ENCODE measurements at regions of chr12 and their contacts with region 1.

Region 1: DNA sequence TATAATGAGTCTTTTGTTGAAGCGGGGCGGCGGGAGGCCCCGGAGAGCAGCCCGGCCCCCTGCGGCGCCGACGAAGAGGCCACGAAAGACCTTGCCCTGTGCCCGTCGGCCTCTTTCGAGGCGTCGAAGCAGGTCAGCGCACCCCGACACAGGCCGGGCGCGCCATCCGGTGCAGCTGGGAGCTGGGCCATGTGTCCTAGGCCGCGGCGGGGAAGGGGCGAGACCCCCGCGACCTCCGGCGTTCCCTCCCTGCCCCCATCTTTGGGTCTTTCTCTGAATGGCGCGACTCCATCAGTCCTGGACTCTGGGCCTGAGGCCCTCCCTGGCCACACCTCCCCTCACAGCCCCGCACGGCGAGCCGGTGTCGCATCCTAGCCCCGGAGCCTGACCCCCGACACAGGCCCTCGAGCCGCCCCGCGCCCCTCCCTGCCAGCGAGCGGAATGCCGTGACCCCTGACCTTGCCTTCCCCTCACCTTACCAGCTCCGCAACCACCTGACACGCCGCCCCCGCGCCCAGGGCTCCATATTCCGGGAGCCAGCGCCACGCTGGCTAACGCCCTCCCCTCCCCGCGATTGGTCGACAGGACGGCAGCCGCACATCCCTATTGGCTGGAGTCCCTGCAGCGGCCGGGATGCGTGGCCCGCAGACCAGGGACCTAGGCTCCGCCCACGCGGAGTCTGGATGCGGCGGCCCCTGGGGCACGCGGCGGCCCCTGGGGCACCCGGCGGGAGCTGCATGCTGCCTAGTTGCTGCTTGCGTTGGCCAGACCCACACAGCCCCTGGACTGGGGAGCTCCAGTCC is at the start of gene SLC11A2:
- DNase-seq: peak; percentile 86
- ATAC-seq: peak; percentile 98
- H3K4me3 Mint-ChIP-seq: peak within 1 kb of the TSS; percentile 99
- H3K27ac Mint-ChIP-seq: peak within 1 kb of the TSS; percentile 93
- H3K4me1 Mint-ChIP-seq: peaks cover 42% of the 10 kb centered on the region
- H3K27me3 Mint-ChIP-seq: no peaks in the 10 kb centered on the region
- CTCF ChIP-seq: no peak
- total RNA-seq, gene SLC11A2: 32.3 and 44.6 TPM in 2 replicates

Region 2: DNA sequence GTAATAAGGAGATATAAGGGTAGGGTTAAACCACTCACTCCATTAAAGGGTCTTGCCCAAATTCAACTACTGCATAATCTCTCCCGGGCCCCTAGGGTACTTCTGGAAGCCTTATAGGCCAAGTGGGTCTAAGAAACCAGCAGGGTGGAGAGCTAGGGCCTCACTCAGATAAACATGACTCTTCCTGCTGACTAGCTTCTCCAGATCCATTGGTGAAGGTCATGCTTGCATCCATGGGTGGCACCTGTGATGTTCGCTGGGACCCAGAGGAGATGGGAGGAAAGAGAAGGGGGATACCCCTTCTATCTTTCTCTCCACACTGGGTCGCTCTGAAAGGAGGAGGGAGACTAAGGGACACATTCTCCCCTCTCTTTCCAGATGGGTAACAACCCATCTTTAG is 109.7 kb before region 1 on chr12:
- CTCF ChIA-PET with region 1: no interaction called
- POLR2A ChIA-PET with region 1: no interaction called
- intact Hi-C with region 1: no loop called
- DNase-seq: no peak
- ATAC-seq: no peak
- H3K4me3 Mint-ChIP-seq: no peak overlapping the region
- H3K27ac Mint-ChIP-seq: no peak overlapping the region
- H3K4me1 Mint-ChIP-seq: peaks cover 7% of the 10 kb centered on the region
- H3K27me3 Mint-ChIP-seq: no peaks in the 10 kb centered on the region
- CTCF ChIP-seq: no peak

Region 3: DNA sequence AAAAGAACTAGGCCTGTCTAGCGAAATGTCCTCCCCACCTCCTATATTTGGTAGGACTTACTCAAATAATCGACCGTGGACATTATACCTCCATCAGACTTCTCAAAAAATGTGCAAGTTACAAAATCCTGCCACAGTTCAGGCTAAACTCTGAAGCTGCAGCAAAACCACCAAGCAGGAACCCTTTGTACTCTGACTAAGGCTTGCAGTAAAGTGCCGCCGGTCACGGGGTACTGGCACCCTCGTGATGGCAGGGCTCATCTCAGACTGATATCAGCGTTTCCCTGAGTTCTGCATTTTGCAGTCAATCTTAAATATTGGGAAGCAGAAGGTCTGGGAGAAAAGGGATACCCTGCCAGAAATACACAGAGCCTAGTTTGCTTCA is 17.0 kb before region 1 on chr12:
- CTCF ChIA-PET with region 1: interaction called, 4 read pairs
- POLR2A ChIA-PET with region 1: interaction called, 4 read pairs
- intact Hi-C with region 1: loop called (anchors 2 kb)
- DNase-seq: no peak
- ATAC-seq: peak; percentile 68
- H3K4me3 Mint-ChIP-seq: peak overlapping the region; percentile 63
- H3K27ac Mint-ChIP-seq: peak overlapping the region; percentile 63
- H3K4me1 Mint-ChIP-seq: peaks cover 14% of the 10 kb centered on the region
- H3K27me3 Mint-ChIP-seq: no peaks in the 10 kb centered on the region
- CTCF ChIP-seq: no peak